Activated naive CD4-positive, alpha-beta T cell treated with anti-CD3 and anti-CD28 coated beads, Interleukin-2, amount 10 ng/mL, durations not matched to agents 7 days and 5 days (primary cell): ENCODE measurements at regions of chr18 and their contacts with region 1.

Region 1: GRCh38 chr18:63016270-63016669 is 300.9 kb downstream of the PHLPP1 start:
- DNase-seq: peak; percentile 67
- H3K4me3 Mint-ChIP-seq: no peak overlapping the region
- H3K27ac Mint-ChIP-seq: no peak overlapping the region
- H3K4me1 Mint-ChIP-seq: no peaks in the 10 kb centered on the region
- H3K27me3 Mint-ChIP-seq: peaks cover 38% of the 10 kb centered on the region

Region 2: DNA sequence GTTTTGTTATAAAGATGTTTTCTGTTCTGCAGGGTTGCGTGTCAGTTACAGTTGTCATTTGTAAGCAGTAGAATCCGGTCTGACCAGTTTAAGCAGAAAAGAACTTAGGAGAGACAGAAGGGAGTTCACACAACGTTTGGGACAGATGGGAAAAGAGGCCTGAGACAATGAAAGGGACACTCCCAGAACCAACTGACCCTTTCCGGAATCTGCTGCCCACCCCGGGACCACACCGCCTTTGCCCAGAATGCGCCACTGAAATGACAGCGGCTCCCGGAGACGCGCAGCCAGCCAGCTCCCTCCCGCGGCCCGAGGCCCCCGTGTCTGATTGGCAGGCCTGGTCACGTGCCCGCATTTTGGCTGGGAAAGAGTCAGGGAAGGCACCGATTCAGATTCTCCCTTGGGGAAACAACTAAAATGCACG is 58.7 kb after region 1 on chr18:
- CTCF ChIA-PET with region 1: interaction called, 11 read pairs
- DNase-seq: peak; percentile 73
- H3K4me3 Mint-ChIP-seq: peak overlapping the region; percentile 65
- H3K27ac Mint-ChIP-seq: peak overlapping the region; percentile 3
- H3K4me1 Mint-ChIP-seq: peaks cover 18% of the 10 kb centered on the region
- H3K27me3 Mint-ChIP-seq: peaks cover 28% of the 10 kb centered on the region

Region 3: GRCh38 chr18:63131106-63131958 is 115.1 kb after region 1 on chr18:
- CTCF ChIA-PET with region 1: interaction called, 10 read pairs
- DNase-seq: peak; percentile 72
- H3K4me3 Mint-ChIP-seq: no peak overlapping the region
- H3K27ac Mint-ChIP-seq: peak overlapping the region; percentile 62
- H3K4me1 Mint-ChIP-seq: peaks cover 49% of the 10 kb centered on the region
- H3K27me3 Mint-ChIP-seq: no peaks in the 10 kb centered on the region

Region 4: GRCh38 chr18:63216516-63217311 is 200.4 kb after region 1 on chr18:
- CTCF ChIA-PET with region 1: no interaction called
- DNase-seq: peak; percentile 60
- H3K4me3 Mint-ChIP-seq: peak overlapping the region; percentile 61
- H3K27ac Mint-ChIP-seq: peak overlapping the region; percentile 94
- H3K4me1 Mint-ChIP-seq: peaks cover 98% of the 10 kb centered on the region
- H3K27me3 Mint-ChIP-seq: no peaks in the 10 kb centered on the region

Region 5: GRCh38 chr18:63339920-63340484 is 323.7 kb after region 1 on chr18:
- CTCF ChIA-PET with region 1: interaction called, 54 read pairs
- DNase-seq: peak; percentile 66
- H3K4me3 Mint-ChIP-seq: no peak overlapping the region
- H3K27ac Mint-ChIP-seq: no peak overlapping the region
- H3K4me1 Mint-ChIP-seq: no peaks in the 10 kb centered on the region
- H3K27me3 Mint-ChIP-seq: no peaks in the 10 kb centered on the region